Natural killer cell (primary cell): ENCODE measurements at regions of chr10 and their contacts with region 1.

Region 1: DNA sequence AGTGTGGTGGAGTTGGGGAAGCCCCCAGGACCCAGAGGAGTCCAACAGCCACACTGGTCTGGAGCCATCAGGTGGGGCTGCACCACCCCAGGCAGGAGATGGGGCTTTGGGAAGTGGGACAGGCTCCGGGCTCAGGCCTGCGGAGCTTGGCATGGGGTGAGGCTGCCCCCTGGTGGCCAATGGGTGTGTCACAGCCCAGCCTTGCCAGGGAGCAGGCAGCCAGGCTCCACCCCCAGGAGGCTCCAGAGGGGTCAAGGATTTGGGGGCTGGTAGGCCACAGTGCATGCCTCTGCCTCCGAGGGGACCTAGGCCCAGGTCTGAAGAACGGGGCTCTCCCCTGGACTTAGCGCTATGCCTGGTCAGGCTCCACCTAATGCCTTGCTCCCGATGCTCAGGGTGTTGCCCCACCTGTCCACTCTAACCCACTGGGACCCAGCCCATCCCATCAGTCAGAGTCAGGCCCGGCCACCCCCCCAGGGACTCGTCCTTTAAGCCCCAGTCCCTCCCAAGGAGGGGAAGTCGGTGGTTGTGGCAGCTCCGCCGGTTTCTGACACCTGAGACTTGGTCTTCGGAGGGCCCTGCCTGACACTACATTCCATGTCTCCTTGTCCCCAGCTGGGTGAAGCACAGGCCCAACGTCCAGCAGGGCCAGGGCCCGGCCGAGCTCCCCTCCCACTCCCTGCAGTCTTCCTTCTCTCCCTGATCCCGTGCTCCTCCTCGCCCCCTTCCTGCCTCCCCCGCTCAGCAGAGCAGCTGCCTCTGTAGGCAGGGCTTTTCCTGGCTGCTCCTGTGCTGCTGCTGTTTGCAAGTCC is 11.3 kb upstream of the SAMD8 start:
- DNase-seq: peak; percentile 83 to 89
- ATAC-seq: peak; percentile 90 to 100 (median 99)
- H3K4me3 ChIP-seq: no peak overlapping the region
- H3K4me3 Mint-ChIP-seq: no peak overlapping the region
- H3K27ac ChIP-seq: no peak overlapping the region
- H3K27ac Mint-ChIP-seq: no peak overlapping the region
- H3K4me1 ChIP-seq: peaks cover 10% of the 10 kb centered on the region
- H3K4me1 Mint-ChIP-seq: peaks cover 0 to 10% of the 10 kb centered on the region in 2 donors
- H3K27me3 ChIP-seq: no peaks in the 10 kb centered on the region
- H3K27me3 Mint-ChIP-seq: no peaks in the 10 kb centered on the region
- CTCF ChIP-seq: peak; percentile 99

Region 2: GRCh38 chr10:74244097-74244685 is 856.0 kb before region 1 on chr10:
- intact Hi-C with region 1: loop called (anchors 1 kb)
- DNase-seq: peak in 1 of 2 donors; percentile 72
- ATAC-seq: no peak
- H3K4me3 ChIP-seq: no peak overlapping the region
- H3K4me3 Mint-ChIP-seq: no peak overlapping the region
- H3K27ac ChIP-seq: no peak overlapping the region
- H3K27ac Mint-ChIP-seq: no peak overlapping the region
- H3K4me1 ChIP-seq: no peaks in the 10 kb centered on the region
- H3K4me1 Mint-ChIP-seq: no peaks in the 10 kb centered on the region
- H3K27me3 ChIP-seq: no peaks in the 10 kb centered on the region
- H3K27me3 Mint-ChIP-seq: no peaks in the 10 kb centered on the region
- CTCF ChIP-seq: peak; percentile 74

Region 3: GRCh38 chr10:74262856-74263255 is 837.3 kb before region 1 on chr10:
- intact Hi-C with region 1: loop called (anchors 1 kb)
- DNase-seq: no peak
- ATAC-seq: no peak
- H3K4me3 ChIP-seq: no peak overlapping the region
- H3K4me3 Mint-ChIP-seq: no peak overlapping the region
- H3K27ac ChIP-seq: no peak overlapping the region
- H3K27ac Mint-ChIP-seq: no peak overlapping the region
- H3K4me1 ChIP-seq: peaks cover 4% of the 10 kb centered on the region
- H3K4me1 Mint-ChIP-seq: peaks cover 0 to 8% of the 10 kb centered on the region in 2 donors
- H3K27me3 ChIP-seq: no peaks in the 10 kb centered on the region
- H3K27me3 Mint-ChIP-seq: no peaks in the 10 kb centered on the region
- CTCF ChIP-seq: no peak

Region 4: GRCh38 chr10:74419958-74420375 is 680.2 kb before region 1 on chr10:
- intact Hi-C with region 1: loop called (anchors 2 kb)
- DNase-seq: peak in 1 of 2 donors; percentile 63
- ATAC-seq: peak; percentile 49 to 59 (median 57)
- H3K4me3 ChIP-seq: no peak overlapping the region
- H3K4me3 Mint-ChIP-seq: no peak overlapping the region
- H3K27ac ChIP-seq: no peak overlapping the region
- H3K27ac Mint-ChIP-seq: no peak overlapping the region
- H3K4me1 ChIP-seq: no peaks in the 10 kb centered on the region
- H3K4me1 Mint-ChIP-seq: no peaks in the 10 kb centered on the region
- H3K27me3 ChIP-seq: no peaks in the 10 kb centered on the region
- H3K27me3 Mint-ChIP-seq: no peaks in the 10 kb centered on the region
- CTCF ChIP-seq: peak; percentile 69